ENCODE measurements at regions of chr17 and their contacts with region 1.

Region 1: DNA sequence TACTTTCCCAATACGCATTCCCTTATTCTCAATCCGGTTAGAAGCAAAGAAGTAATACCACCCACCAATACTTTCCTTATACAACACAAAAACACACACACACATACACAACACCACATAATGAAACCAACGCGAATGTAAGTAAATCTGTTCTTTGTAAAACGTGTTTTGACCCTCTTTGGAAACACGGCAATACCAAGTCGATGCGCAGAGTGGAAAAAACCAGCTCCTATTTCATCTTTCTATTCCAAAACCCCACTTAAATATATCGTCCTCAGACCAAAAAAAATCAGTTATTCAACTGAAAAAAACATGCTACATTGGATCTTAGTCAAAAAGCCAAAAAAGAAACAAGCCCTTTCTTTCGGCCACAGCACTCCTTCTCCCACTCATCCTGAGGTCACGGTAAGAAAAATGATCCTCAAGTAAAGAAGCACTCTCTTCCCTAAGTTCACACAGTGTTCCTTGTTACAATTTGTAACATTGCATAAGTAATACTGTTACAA is 31.0 kb upstream of the ARL4D start:
- DNase-seq: no peak
- ATAC-seq: peak; percentile 1 to 33
- H3K4me3 ChIP-seq: peak overlapping the region; percentile 72
- H3K27ac ChIP-seq: peak overlapping the region; percentile 100
- H3K4me1 ChIP-seq: peaks cover 2% of the 10 kb centered on the region
- H3K27me3 ChIP-seq: no peaks in the 10 kb centered on the region

Region 2: DNA sequence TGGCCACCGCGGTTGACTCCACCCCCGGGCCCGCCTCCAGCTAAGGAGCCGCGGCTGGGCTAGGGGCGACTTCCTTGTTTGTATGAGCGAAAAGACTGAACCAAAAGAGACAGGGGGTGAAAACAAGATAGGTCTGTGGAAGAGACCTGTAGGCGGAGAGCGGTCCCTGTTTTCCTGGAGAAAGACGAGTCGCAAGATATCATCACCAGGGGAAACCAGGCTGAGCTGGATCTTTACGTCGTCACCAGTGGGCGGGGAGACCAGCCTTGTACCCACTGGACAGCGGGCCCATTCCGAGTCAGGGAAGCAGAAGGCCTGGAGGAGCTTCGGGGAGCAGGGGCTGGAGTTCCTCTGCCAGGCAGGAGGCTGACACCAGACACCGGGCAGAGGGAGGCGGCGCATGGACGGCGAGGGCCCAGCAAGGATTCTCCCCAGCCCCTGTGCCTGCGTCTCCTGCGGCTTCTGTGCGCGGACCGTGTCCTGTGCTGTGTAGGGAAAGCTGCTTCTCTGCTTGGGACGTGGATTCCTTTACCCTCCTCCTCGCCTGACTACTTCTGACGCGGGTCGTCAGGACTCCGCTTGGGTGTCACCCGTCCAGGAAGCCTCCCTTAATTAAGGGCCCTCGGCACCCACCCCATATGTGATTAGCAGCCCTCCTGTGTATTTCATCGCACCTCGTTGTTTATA is 20.7 kb after region 1 on chr17:
- intact Hi-C with region 1: loop called in 2 of 4 experiments (anchors 2 kb)
- DNase-seq: peak; percentile 91 to 97 (median 95)
- ATAC-seq: peak; percentile 92 to 93
- H3K4me3 ChIP-seq: peak overlapping the region; percentile 72
- H3K27ac ChIP-seq: peak overlapping the region; percentile 96
- H3K4me1 ChIP-seq: no peaks in the 10 kb centered on the region
- H3K27me3 ChIP-seq: no peaks in the 10 kb centered on the region